CD4-positive, alpha-beta T cell (primary cell): ENCODE measurements at regions of chr15 and their contacts with region 1.

Region 1: GRCh38 chr15:51192521-51193280 is 98.0 kb upstream of the TNFAIP8L3 start:
- DNase-seq: peak; percentile 34 to 72 (median 50)
- ATAC-seq: no peak
- H3K4me3 ChIP-seq: no peak overlapping the region
- H3K4me3 Mint-ChIP-seq: no peak overlapping the region
- H3K27ac ChIP-seq: no peak overlapping the region
- H3K27ac Mint-ChIP-seq: no peak overlapping the region
- H3K4me1 ChIP-seq: peaks cover 5% of the 10 kb centered on the region
- H3K4me1 Mint-ChIP-seq: no peaks in the 10 kb centered on the region
- H3K27me3 ChIP-seq: peaks cover 6 to 25% of the 10 kb centered on the region in 2 experiments
- H3K27me3 Mint-ChIP-seq: peaks cover 51% of the 10 kb centered on the region
- CTCF ChIP-seq: peak; percentile 85

Region 2: DNA sequence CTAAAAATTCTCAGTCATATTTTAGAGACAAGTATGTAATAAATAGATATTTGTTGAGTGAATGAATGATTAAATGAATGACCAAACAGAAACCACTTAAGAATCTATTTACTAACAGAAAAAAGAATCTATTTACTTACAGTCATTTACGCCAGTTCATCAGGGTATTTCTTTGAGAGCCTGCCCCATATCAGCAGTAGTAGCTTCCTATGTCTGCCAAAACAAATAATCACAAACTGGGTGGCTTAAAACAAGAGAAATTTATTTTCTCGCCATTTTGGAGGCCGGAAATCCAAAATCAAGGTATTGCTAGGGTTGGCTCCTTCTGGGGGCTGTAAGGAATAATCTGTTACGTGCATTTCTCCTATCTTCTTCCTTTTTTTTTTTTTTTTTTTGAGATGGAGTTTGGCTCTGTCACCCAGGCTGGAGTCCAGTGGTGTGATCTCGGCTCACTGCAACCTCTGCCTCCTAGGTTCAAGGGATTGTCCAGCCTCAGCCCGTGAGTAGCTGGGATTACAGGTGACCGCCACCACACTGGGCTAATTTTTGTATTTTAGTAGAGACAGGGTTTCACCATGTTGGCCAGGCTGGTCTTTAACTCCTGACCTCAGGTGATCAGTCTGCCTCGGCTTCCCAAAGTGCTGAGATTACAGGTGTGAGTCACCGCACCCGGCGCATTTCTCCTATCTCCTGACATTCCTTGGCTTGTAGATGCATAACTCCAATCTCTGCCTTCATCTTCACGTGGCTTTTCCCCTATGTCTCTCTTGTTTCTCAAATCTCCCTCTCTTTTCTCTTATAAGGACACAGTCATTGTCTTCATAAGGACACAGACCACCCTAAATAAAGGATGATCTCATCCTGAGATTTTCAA is 362.0 kb before region 1 on chr15:
- CTCF ChIA-PET with region 1: no interaction called
- POLR2A ChIA-PET with region 1: no interaction called
- intact Hi-C with region 1: loop called in 1 of 2 experiments (anchors 10 kb)
- DNase-seq: no peak
- ATAC-seq: no peak
- H3K4me3 ChIP-seq: no peak overlapping the region
- H3K4me3 Mint-ChIP-seq: no peak overlapping the region
- H3K27ac ChIP-seq: no peak overlapping the region
- H3K27ac Mint-ChIP-seq: no peak overlapping the region
- H3K4me1 ChIP-seq: no peaks in the 10 kb centered on the region
- H3K4me1 Mint-ChIP-seq: no peaks in the 10 kb centered on the region
- H3K27me3 ChIP-seq: no peaks in the 10 kb centered on the region
- H3K27me3 Mint-ChIP-seq: peaks cover 10% of the 10 kb centered on the region
- CTCF ChIP-seq: no peak